Heart left ventricle (tissue), 16 donors: ENCODE measurements at regions of chr22 and their contacts with region 1.

Region 1: GRCh38 chr22:22959147-22959827 is 71.7 kb downstream of the IGLL5 start:
- DNase-seq: peak; percentile 64 to 73 (median 70)
- ATAC-seq: peak; percentile 35 to 74 (median 71)
- H3K4me3 ChIP-seq: no peak overlapping the region
- H3K27ac ChIP-seq: peak overlapping the region in 9 of 12 donors; percentile 43 to 79 (median 66)
- H3K4me1 ChIP-seq: peaks cover 0 to 14% (median 6%) of the 10 kb centered on the region in 12 donors
- H3K27me3 ChIP-seq: peaks cover 0 to 17% (median 0%) of the 10 kb centered on the region in 9 donors
- CTCF ChIP-seq: peak; percentile 80 to 99 (median 92)
- POLR2A ChIP-seq: no peak

Region 2: DNA sequence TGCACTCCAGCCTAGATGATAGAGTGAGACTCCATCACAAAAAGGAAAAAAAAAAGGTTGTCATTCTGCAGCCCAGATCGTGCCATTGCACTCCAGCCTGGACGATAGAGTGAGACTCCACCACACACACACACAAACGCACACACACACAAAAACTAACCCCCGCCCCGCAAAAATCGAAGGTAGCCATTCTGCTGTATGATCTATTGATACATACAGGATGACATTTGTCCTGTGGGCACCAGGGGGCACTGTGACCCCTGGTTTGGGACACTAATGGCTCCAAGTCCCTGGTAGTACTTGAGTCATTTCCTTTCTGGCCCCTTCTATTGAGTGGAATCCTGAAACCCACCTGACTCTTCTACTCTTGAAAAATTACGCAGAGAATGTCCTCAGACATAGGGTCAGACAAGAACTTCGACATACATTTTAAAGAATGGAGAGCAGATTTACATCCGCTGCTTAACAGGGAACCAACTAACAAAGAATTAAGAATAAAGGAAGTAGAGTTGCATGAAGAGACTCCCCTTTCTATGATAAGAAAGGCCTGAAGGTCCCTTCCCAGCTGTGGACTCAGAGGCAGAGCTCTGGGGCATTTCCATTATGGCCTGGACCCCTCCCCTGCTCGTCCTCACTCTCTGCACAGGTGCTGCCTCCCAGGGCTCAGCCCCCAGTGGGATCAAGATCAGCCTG is 365.2 kb before region 1 on chr22:
- intact Hi-C with region 1: loop called in 1 of 10 experiments (anchors 10 kb)
- DNase-seq: peak in 2 of 5 donors; percentile 13 to 69
- ATAC-seq: peak in 1 of 4 donors; percentile 45
- H3K4me3 ChIP-seq: no peak overlapping the region
- H3K27ac ChIP-seq: no peak overlapping the region
- H3K4me1 ChIP-seq: no peaks in the 10 kb centered on the region
- H3K27me3 ChIP-seq: peaks cover 0 to 3% (median 0%) of the 10 kb centered on the region in 9 donors
- CTCF ChIP-seq: peak; percentile 36 to 63 (median 53)
- POLR2A ChIP-seq: no peak

Region 3: DNA sequence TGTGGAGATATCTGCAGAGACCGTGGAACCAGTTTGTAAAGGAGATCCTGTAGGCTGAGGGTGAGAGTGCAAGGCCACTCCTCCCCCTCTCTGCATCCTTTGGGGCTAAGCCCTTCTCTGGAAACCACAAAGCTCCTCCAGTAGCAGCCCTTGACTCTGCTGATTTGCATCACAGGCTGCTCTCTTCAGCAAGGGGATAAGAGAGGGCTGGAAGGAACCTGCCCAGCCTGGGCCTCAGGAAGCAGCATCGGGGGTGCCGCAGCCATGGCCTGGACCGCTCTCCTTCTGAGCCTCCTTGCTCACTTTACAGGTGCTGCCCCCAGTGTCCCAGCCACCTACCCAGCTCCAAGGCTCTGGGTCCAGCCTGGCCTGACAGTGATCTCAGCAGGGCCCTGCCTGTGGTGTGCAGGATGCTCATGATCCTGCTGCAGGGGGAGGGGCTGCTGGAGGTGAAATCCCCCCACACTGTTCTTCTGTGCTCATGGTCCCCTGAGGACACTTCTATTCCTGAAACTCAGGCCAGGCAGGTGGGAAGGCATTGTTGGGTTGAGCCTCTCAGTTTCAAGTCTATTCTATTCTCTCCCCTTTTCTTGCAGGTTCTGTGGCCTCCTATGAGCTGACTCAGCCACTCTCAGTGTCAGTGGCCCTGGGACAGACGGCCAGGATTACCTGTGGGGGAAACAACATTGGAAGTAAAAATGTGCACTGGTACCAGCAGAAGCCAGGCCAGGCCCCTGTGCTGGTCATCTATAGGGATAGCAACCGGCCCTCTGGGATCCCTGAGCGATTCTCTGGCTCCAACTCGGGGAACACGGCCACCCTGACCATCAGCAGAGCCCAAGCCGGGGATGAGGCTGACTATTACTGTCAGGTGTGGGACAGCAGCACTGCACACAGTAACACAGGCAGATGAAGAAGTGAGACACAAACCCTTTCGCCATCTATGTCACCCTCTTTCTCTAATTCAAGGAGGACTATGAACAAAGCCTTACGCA is 140.1 kb before region 1 on chr22:
- intact Hi-C with region 1: no loop called
- DNase-seq: no peak
- ATAC-seq: no peak
- H3K4me3 ChIP-seq: peak overlapping the region in 1 of 12 donors; percentile 20
- H3K27ac ChIP-seq: peak overlapping the region in 1 of 12 donors; percentile 82
- H3K4me1 ChIP-seq: peaks cover 0 to 63% (median 0%) of the 10 kb centered on the region in 12 donors
- H3K27me3 ChIP-seq: no peaks in the 10 kb centered on the region
- CTCF ChIP-seq: no peak
- POLR2A ChIP-seq: no peak

Region 4: DNA sequence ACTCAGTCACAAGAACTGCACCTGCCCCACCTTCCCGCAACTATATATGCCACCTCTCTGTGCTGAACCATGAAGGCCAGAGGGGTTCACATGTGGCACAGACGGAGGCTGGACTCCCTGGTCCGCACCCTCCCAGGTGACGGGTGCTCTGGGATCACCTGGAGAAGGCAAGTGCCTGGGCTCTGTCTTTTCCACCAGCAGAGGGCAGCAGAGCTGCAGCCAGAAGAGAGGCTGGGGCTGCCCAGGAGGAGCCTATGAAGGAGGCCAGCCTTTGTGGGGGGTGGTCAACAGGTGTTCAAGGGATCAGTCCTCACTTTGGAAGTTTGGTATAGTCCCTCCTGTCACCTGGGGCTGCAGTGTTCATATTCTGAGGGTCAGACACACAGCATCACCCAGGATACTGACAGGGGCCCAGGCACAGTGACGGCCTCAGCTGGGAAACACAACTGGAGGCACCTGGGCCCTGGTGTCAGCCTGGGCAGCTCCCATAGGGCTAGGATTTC is 110.9 kb before region 1 on chr22:
- intact Hi-C with region 1: loop called in 8 of 10 experiments (anchors 2 to 5 kb)
- DNase-seq: peak; percentile 43 to 75 (median 53)
- ATAC-seq: peak in 3 of 4 donors; percentile 47 to 81 (median 72)
- H3K4me3 ChIP-seq: no peak overlapping the region
- H3K27ac ChIP-seq: no peak overlapping the region
- H3K4me1 ChIP-seq: peaks cover 0 to 7% (median 0%) of the 10 kb centered on the region in 12 donors
- H3K27me3 ChIP-seq: peaks cover 0 to 35% (median 0%) of the 10 kb centered on the region in 9 donors
- CTCF ChIP-seq: peak; percentile 69 to 95 (median 86)
- POLR2A ChIP-seq: peak in 1 of 2 donors; percentile 26

Region 5: GRCh38 chr22:23128269-23129108 is 169.2 kb after region 1 on chr22:
- intact Hi-C with region 1: loop called (anchors 1 to 2 kb)
- DNase-seq: peak; percentile 70 to 76 (median 72)
- ATAC-seq: peak; percentile 71 to 95 (median 88)
- H3K4me3 ChIP-seq: no peak overlapping the region
- H3K27ac ChIP-seq: no peak overlapping the region
- H3K4me1 ChIP-seq: peaks cover 0 to 10% (median 3%) of the 10 kb centered on the region in 12 donors
- H3K27me3 ChIP-seq: no peaks in the 10 kb centered on the region
- CTCF ChIP-seq: peak; percentile 67 to 91 (median 80)
- POLR2A ChIP-seq: no peak

Region 6: GRCh38 chr22:23289851-23290724 is 330.8 kb after region 1 on chr22:
- intact Hi-C with region 1: loop called in 5 of 10 experiments (anchors 10 kb)
- DNase-seq: peak in 1 of 5 donors; percentile 47
- ATAC-seq: peak; percentile 44 to 64 (median 46)
- H3K4me3 ChIP-seq: no peak overlapping the region
- H3K27ac ChIP-seq: peak overlapping the region in 4 of 12 donors; percentile 7 to 40 (median 21)
- H3K4me1 ChIP-seq: peaks cover 0 to 9% (median 5%) of the 10 kb centered on the region in 12 donors
- H3K27me3 ChIP-seq: no peaks in the 10 kb centered on the region
- CTCF ChIP-seq: peak; percentile 60 to 90 (median 76)
- POLR2A ChIP-seq: no peak